B cell (primary cell): ENCODE measurements at regions of chr20 and their contacts with region 1.

Region 1: GRCh38 chr20:34312544-34313217 is 9.5 kb upstream of the AHCY start:
- DNase-seq: peak; percentile 90
- ATAC-seq: peak; percentile 100
- H3K4me3 ChIP-seq: no peak overlapping the region
- H3K4me3 Mint-ChIP-seq: peak overlapping the region; percentile 32
- H3K27ac ChIP-seq: no peak overlapping the region
- H3K27ac Mint-ChIP-seq: peak overlapping the region; percentile 50
- H3K4me1 ChIP-seq: peaks cover 17 to 20% of the 10 kb centered on the region in 2 donors
- H3K4me1 Mint-ChIP-seq: peaks cover 16% of the 10 kb centered on the region
- H3K27me3 ChIP-seq: peaks cover 0 to 18% (median 13%) of the 10 kb centered on the region in 4 experiments
- H3K27me3 Mint-ChIP-seq: peaks cover 13% of the 10 kb centered on the region
- CTCF ChIP-seq: peak; percentile 100

Region 2: GRCh38 chr20:33915726-33916331 is 396.9 kb before region 1 on chr20:
- CTCF ChIA-PET with region 1: no interaction called
- POLR2A ChIA-PET with region 1: no interaction called
- intact Hi-C with region 1: no loop called
- DNase-seq: peak; percentile 56
- ATAC-seq: no peak
- H3K4me3 ChIP-seq: no peak overlapping the region
- H3K4me3 Mint-ChIP-seq: no peak overlapping the region
- H3K27ac ChIP-seq: no peak overlapping the region
- H3K27ac Mint-ChIP-seq: no peak overlapping the region
- H3K4me1 ChIP-seq: peaks cover 2 to 15% of the 10 kb centered on the region in 2 donors
- H3K4me1 Mint-ChIP-seq: peaks cover 13% of the 10 kb centered on the region
- H3K27me3 ChIP-seq: peaks cover 0 to 3% (median 0%) of the 10 kb centered on the region in 4 experiments
- H3K27me3 Mint-ChIP-seq: peaks cover 13% of the 10 kb centered on the region
- CTCF ChIP-seq: peak; percentile 74

Region 3: DNA sequence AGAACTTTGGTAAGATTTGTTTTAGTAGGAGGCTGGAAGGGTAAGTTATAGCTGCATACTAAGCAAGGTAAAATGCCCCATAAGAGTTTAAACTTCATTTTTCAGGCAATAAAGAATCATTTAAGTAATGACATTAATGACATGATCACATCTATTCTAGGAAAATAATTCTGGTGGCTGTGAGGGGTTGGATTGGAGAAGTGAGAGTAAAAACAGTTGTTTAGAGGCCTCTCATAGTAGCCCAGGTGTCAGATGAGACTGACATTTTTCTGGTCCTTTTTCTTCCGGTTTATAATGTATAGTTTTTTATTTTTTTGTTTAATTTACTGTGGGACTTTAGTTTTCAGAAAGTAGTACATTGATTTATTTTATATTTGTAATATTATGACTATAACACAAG is 91.2 kb after region 1 on chr20:
- CTCF ChIA-PET with region 1: interaction called, 15 read pairs
- POLR2A ChIA-PET with region 1: interaction called, 12 read pairs
- intact Hi-C with region 1: no loop called
- DNase-seq: peak; percentile 52
- ATAC-seq: peak; percentile 83
- H3K4me3 ChIP-seq: no peak overlapping the region
- H3K4me3 Mint-ChIP-seq: peak overlapping the region; percentile 12
- H3K27ac ChIP-seq: peak overlapping the region; percentile 27 to 67
- H3K27ac Mint-ChIP-seq: peak overlapping the region; percentile 54
- H3K4me1 ChIP-seq: peaks cover 38 to 41% of the 10 kb centered on the region in 2 donors
- H3K4me1 Mint-ChIP-seq: peaks cover 50% of the 10 kb centered on the region
- H3K27me3 ChIP-seq: no peaks in the 10 kb centered on the region
- H3K27me3 Mint-ChIP-seq: no peaks in the 10 kb centered on the region
- CTCF ChIP-seq: no peak

Region 4: GRCh38 chr20:34473262-34473883 is 160.7 kb after region 1 on chr20:
- CTCF ChIA-PET with region 1: interaction called, 25 read pairs
- POLR2A ChIA-PET with region 1: no interaction called
- intact Hi-C with region 1: loop called (anchors 1 kb)
- DNase-seq: peak; percentile 45
- ATAC-seq: peak; percentile 28
- H3K4me3 ChIP-seq: no peak overlapping the region
- H3K4me3 Mint-ChIP-seq: no peak overlapping the region
- H3K27ac ChIP-seq: no peak overlapping the region
- H3K27ac Mint-ChIP-seq: no peak overlapping the region
- H3K4me1 ChIP-seq: peaks cover 0 to 3% of the 10 kb centered on the region in 2 donors
- H3K4me1 Mint-ChIP-seq: peaks cover 9% of the 10 kb centered on the region
- H3K27me3 ChIP-seq: no peaks in the 10 kb centered on the region
- H3K27me3 Mint-ChIP-seq: no peaks in the 10 kb centered on the region
- CTCF ChIP-seq: peak; percentile 40

Region 5: DNA sequence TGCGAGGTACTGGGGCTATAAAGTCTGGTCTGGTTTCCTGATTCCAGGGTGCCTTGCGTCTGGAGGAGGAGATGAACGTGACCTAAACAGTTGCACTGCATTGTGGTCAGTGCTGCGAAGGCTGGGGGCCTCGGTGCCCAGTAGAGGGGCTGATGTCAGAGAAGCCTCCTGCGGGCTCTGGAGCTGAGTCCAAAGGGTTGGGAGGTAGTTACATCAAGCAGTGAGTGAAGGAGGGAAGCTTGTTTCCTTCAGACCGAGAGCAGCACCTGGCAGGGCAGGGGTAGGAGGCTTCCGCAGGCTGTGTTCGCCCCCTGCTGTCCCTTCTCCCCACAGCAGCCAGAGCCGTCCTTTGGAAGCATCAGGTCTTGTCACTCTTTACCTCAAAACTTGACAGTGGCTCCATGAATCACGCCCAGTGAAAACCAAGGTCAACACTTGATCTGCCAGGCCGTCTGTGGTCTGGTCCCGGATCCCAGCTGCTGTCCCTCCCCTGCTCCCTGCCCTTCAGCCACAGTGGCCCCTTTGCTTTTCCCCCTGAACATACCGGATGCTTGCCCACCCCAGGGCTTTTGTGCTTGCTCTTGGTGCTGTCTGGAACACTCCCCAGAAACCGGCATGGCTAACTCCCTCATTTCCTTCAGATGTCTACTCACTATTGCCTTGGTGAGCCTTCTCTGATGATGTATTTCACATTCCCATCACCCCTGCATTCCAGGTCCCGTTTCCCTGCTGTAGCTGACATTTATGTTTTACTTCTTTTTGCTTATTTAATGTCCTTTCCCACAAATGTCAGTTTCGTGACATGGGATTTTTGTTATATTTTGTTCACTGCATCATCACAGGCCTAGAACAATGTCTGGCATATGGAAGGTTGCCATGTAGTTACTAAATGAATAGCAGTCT is 210.5 kb after region 1 on chr20:
- CTCF ChIA-PET with region 1: interaction called, 49 read pairs
- POLR2A ChIA-PET with region 1: no interaction called
- intact Hi-C with region 1: loop called (anchors 1 kb)
- DNase-seq: peak; percentile 61
- ATAC-seq: peak; percentile 45
- H3K4me3 ChIP-seq: no peak overlapping the region
- H3K4me3 Mint-ChIP-seq: no peak overlapping the region
- H3K27ac ChIP-seq: no peak overlapping the region
- H3K27ac Mint-ChIP-seq: no peak overlapping the region
- H3K4me1 ChIP-seq: peaks cover 3 to 6% of the 10 kb centered on the region in 2 donors
- H3K4me1 Mint-ChIP-seq: peaks cover 33% of the 10 kb centered on the region
- H3K27me3 ChIP-seq: no peaks in the 10 kb centered on the region
- H3K27me3 Mint-ChIP-seq: no peaks in the 10 kb centered on the region
- CTCF ChIP-seq: peak; percentile 46

Region 6: DNA sequence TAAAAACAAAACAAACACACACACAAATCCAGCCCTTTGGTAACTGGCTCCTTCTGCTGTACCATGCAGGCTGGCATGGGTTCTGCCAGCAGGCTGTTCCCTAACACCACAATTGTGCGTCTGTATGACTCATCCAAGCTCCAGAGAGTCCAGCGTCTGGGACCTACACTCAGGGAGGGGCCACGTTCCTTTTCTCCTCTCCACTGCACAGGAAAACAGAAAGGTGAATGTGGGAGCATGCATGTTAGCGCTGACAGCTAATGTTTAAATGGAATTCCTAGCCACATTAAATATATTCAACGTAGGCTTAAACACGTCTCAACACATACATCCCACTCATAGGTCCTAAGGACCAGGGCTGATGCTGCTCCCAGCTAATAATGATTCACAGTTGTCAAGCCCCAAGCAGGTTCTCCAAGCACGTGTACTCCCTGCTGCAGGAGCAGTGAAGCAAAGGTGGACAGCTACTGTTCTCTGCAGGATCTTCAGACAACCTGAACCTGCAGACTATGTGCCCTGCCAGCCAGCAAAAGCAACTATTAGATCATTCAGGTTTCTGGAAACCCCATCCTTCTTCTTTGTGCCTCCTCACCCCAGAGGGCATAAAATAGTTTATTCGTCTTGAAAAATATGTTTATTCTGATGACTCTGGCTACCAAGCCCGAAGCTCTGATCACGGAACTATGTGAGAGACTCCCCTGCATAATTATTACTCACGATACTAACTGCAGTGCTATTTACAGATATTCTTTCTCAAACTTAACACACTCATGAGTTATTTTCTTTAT is 266.7 kb after region 1 on chr20:
- CTCF ChIA-PET with region 1: no interaction called
- POLR2A ChIA-PET with region 1: no interaction called
- intact Hi-C with region 1: no loop called
- DNase-seq: no peak
- ATAC-seq: no peak
- H3K4me3 ChIP-seq: no peak overlapping the region
- H3K4me3 Mint-ChIP-seq: no peak overlapping the region
- H3K27ac ChIP-seq: peak overlapping the region; percentile 52 to 75
- H3K27ac Mint-ChIP-seq: peak overlapping the region; percentile 88
- H3K4me1 ChIP-seq: peaks cover 18 to 29% of the 10 kb centered on the region in 2 donors
- H3K4me1 Mint-ChIP-seq: peaks cover 31% of the 10 kb centered on the region
- H3K27me3 ChIP-seq: no peaks in the 10 kb centered on the region
- H3K27me3 Mint-ChIP-seq: no peaks in the 10 kb centered on the region
- CTCF ChIP-seq: no peak

Region 7: GRCh38 chr20:34629342-34629741 is 316.7 kb after region 1 on chr20:
- CTCF ChIA-PET with region 1: no interaction called
- POLR2A ChIA-PET with region 1: no interaction called
- intact Hi-C with region 1: no loop called
- DNase-seq: no peak
- ATAC-seq: no peak
- H3K4me3 ChIP-seq: no peak overlapping the region
- H3K4me3 Mint-ChIP-seq: no peak overlapping the region
- H3K27ac ChIP-seq: no peak overlapping the region
- H3K27ac Mint-ChIP-seq: no peak overlapping the region
- H3K4me1 ChIP-seq: no peaks in the 10 kb centered on the region
- H3K4me1 Mint-ChIP-seq: no peaks in the 10 kb centered on the region
- H3K27me3 ChIP-seq: no peaks in the 10 kb centered on the region
- H3K27me3 Mint-ChIP-seq: no peaks in the 10 kb centered on the region
- CTCF ChIP-seq: no peak

Region 8: GRCh38 chr20:34768096-34768495 is 455.4 kb after region 1 on chr20:
- CTCF ChIA-PET with region 1: interaction called, 135 read pairs
- POLR2A ChIA-PET with region 1: no interaction called
- intact Hi-C with region 1: loop called (anchors 1 kb)
- DNase-seq: no peak
- ATAC-seq: no peak
- H3K4me3 ChIP-seq: no peak overlapping the region
- H3K4me3 Mint-ChIP-seq: no peak overlapping the region
- H3K27ac ChIP-seq: no peak overlapping the region
- H3K27ac Mint-ChIP-seq: no peak overlapping the region
- H3K4me1 ChIP-seq: no peaks in the 10 kb centered on the region
- H3K4me1 Mint-ChIP-seq: no peaks in the 10 kb centered on the region
- H3K27me3 ChIP-seq: no peaks in the 10 kb centered on the region
- H3K27me3 Mint-ChIP-seq: no peaks in the 10 kb centered on the region
- CTCF ChIP-seq: no peak